Endothelial cell of umbilical vein (primary cell): ENCODE measurements at regions of chr17 and their contacts with region 1.

Region 1: DNA sequence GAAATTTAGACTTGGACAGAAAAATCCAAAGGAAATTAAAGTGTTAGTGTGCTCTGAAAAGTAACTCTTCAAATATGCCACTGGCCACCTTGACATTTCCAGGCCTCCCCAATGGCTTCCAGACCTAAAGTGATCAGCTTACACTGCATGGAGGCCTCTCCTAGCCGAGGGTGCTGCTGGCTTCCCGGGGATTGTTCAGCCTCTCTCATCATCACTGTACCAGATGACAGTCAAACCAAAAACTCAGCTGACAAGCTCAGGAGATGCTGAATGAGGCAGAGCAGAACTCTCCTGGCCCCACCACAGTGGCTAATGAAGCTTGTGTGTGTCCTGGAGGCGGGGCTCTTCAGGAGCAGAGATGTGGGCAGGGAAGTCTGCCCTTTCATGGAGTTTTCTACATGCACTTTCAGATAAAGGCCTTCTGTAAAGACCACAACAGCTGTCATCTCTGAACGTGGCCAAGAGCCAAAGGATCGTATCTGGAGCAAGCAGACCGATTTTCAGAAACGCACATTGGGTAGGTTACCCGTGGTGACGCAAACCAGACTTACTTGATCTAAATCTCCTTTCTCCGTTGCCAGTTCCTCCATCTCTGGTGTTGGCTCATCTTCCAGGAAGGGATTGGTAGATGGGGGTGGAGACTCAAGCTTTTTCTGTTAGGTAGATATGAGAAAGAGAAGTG is 113.3 kb downstream of the VPS53 start:
- DNase-seq: peak; percentile 88
- H3K4me3 ChIP-seq: no peak overlapping the region
- H3K27ac ChIP-seq: peak overlapping the region; percentile 33
- H3K4me1 ChIP-seq: peaks cover 33% of the 10 kb centered on the region
- H3K27me3 ChIP-seq: no peaks in the 10 kb centered on the region
- CTCF ChIP-seq: no peak
- POLR2A ChIP-seq: no peak

Region 2: GRCh38 chr17:693791-694638 is 92.6 kb after region 1 on chr17:
- CTCF ChIA-PET with region 1: interaction called, 5 read pairs
- POLR2A ChIA-PET with region 1: no interaction called
- dilution Hi-C with region 1: loop called (anchors 10 kb)
- intact Hi-C with region 1: no loop called
- DNase-seq: peak; percentile 78
- H3K4me3 ChIP-seq: peak overlapping the region in 1 of 3 experiments; percentile 20
- H3K27ac ChIP-seq: peak overlapping the region; percentile 95
- H3K4me1 ChIP-seq: peaks cover 27% of the 10 kb centered on the region
- H3K27me3 ChIP-seq: no peaks in the 10 kb centered on the region
- CTCF ChIP-seq: no peak
- POLR2A ChIP-seq: no peak

Region 3: GRCh38 chr17:773467-774312 is 172.3 kb after region 1 on chr17:
- CTCF ChIA-PET with region 1: no interaction called
- POLR2A ChIA-PET with region 1: no interaction called
- dilution Hi-C with region 1: no loop called
- intact Hi-C with region 1: no loop called
- DNase-seq: no peak
- H3K4me3 ChIP-seq: no peak overlapping the region
- H3K27ac ChIP-seq: no peak overlapping the region
- H3K4me1 ChIP-seq: no peaks in the 10 kb centered on the region
- H3K27me3 ChIP-seq: no peaks in the 10 kb centered on the region
- CTCF ChIP-seq: no peak
- POLR2A ChIP-seq: no peak